ENCODE measurements at regions of chr6 and their contacts with region 1.

Region 1: DNA sequence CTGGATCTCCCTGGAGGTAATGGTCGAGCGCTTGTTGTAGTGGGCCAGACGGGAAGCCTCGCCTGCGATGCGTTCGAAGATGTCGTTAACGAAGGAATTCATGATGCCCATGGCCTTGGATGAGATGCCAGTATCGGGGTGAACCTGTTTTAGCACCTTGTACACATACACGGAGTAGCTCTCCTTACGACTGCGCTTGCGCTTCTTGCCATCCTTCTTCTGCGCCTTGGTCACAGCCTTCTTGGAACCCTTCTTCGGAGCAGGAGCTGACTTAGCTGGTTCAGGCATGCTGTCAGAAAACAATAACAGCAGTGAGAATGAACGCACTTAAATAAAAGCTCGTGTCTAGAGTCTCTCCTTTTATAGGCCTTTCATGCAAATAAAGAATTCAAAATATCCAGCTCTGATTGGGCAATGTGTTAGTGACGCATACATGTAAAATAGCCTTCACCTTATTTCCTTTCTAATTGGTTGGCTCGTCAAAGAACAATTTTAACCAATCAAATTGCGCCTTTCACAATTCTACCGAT is 129.2 kb downstream of the HFE start:
- DNase-seq: peak; percentile 62
- ATAC-seq: peak; percentile 78
- H3K4me3 Mint-ChIP-seq: no peak overlapping the region
- H3K27ac Mint-ChIP-seq: no peak overlapping the region
- H3K4me1 Mint-ChIP-seq: peaks cover 12% of the 10 kb centered on the region
- H3K27me3 Mint-ChIP-seq: no peaks in the 10 kb centered on the region
- CTCF ChIP-seq: no peak

Region 2: DNA sequence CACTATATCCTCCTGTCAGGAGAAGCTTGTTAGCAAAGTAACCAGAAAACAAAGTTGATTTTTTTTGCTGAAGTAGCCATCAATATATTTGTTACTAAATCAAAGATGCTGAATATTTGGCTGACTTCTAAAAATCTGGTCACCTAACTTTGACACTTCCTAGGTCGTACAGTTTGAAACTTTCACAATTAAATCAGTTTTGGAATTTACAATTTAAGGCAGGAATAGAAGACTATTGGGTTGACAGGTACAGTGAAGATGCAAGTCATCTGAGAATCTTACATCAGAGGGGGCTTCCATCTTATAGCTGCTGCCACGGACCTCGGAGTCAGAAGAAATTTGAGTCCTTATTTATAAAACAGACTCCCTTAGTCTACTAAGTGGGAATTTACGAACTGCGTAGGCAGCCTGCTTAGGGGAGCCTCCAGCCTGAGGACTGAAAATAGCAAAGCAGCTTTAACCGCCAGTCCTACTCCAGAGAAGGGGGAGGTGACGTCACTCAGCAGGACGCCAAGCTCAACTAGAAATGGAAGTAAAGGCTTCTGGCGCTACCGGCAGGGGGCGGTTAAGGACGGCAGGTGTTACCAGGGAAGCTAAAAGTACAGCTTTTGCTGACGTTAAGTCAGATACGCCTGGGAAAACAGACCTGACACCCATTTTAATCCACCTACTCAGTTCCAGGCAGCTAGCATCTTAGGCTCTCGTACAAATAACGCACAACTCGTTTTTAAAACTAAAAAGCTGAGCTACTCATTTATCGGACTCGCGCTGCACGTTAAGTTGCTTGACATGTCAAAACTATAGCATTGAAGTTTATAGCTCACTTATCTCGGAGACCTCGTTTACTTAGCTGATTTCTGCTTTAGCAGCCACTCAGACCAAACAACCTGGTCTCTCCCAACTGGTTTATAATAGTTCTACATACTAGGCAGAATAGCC is 190.3 kb before region 1 on chr6:
- CTCF ChIA-PET with region 1: no interaction called
- POLR2A ChIA-PET with region 1: interaction called, 28 read pairs
- intact Hi-C with region 1: loop called (anchors 5 kb)
- DNase-seq: peak; percentile 76
- ATAC-seq: peak; percentile 39
- H3K4me3 Mint-ChIP-seq: peak overlapping the region; percentile 96
- H3K27ac Mint-ChIP-seq: peak overlapping the region; percentile 99
- H3K4me1 Mint-ChIP-seq: peaks cover 35% of the 10 kb centered on the region
- H3K27me3 Mint-ChIP-seq: peaks cover 2% of the 10 kb centered on the region
- CTCF ChIP-seq: no peak

Region 3: GRCh38 chr6:26175428-26176181 is 40.8 kb before region 1 on chr6:
- CTCF ChIA-PET with region 1: interaction called, 8 read pairs
- POLR2A ChIA-PET with region 1: interaction called, 53 read pairs
- intact Hi-C with region 1: loop called (anchors 1 kb)
- DNase-seq: no peak
- ATAC-seq: no peak
- H3K4me3 Mint-ChIP-seq: no peak overlapping the region
- H3K27ac Mint-ChIP-seq: peak overlapping the region; percentile 65
- H3K4me1 Mint-ChIP-seq: peaks cover 38% of the 10 kb centered on the region
- H3K27me3 Mint-ChIP-seq: no peaks in the 10 kb centered on the region
- CTCF ChIP-seq: no peak

Region 4: GRCh38 chr6:26240154-26241032 is 24.0 kb after region 1 on chr6:
- CTCF ChIA-PET with region 1: interaction called, 3 read pairs
- POLR2A ChIA-PET with region 1: interaction called, 401 read pairs
- intact Hi-C with region 1: no loop called
- DNase-seq: peak; percentile 61
- ATAC-seq: peak; percentile 79
- H3K4me3 Mint-ChIP-seq: peak overlapping the region; percentile 82
- H3K27ac Mint-ChIP-seq: peak overlapping the region; percentile 92
- H3K4me1 Mint-ChIP-seq: peaks cover 26% of the 10 kb centered on the region
- H3K27me3 Mint-ChIP-seq: no peaks in the 10 kb centered on the region
- CTCF ChIP-seq: no peak

Region 5: DNA sequence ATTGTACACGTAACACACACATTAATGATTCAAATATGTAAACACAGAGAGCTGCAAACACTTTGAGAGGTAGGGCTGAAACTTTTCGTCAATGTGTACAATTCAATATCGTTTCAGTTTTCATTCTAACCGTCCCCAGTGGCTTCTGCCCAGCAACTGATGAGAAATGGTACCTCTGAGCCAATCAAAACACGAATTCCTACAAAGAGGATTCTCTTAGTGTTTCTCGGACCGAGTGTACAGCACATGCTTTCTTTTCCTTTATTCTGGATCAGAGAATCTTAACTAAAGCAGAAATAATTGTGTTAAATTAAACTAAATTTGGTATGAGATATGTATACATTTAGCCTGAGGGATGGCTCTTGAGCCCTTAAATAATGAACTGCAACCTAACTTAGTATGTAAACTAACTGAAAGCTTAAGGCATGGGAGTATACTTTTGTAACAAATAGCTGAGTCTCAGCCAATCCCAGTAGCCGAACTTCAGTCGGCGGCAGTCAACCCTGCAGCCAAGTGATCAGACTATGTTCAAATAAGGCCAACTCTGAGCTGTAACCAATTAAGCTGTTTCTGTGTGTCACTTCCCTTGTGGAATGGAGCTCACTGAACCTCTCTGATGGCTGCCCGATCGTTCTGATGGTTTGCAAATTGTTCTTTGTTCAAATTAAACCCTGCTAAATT is 257.5 kb after region 1 on chr6:
- CTCF ChIA-PET with region 1: no interaction called
- POLR2A ChIA-PET with region 1: interaction called, 14 read pairs
- intact Hi-C with region 1: no loop called
- DNase-seq: peak; percentile 49
- ATAC-seq: peak; percentile 94
- H3K4me3 Mint-ChIP-seq: peak overlapping the region; percentile 96
- H3K27ac Mint-ChIP-seq: peak overlapping the region; percentile 100
- H3K4me1 Mint-ChIP-seq: peaks cover 70% of the 10 kb centered on the region
- H3K27me3 Mint-ChIP-seq: no peaks in the 10 kb centered on the region
- CTCF ChIP-seq: no peak

Region 6: GRCh38 chr6:27146706-27147505 is 930.5 kb after region 1 on chr6:
- CTCF ChIA-PET with region 1: no interaction called
- POLR2A ChIA-PET with region 1: interaction called, 31 read pairs
- intact Hi-C with region 1: no loop called
- DNase-seq: peak; percentile 70
- ATAC-seq: peak; percentile 80
- H3K4me3 Mint-ChIP-seq: no peak overlapping the region
- H3K27ac Mint-ChIP-seq: no peak overlapping the region
- H3K4me1 Mint-ChIP-seq: peaks cover 26% of the 10 kb centered on the region
- H3K27me3 Mint-ChIP-seq: no peaks in the 10 kb centered on the region
- CTCF ChIP-seq: no peak

Measured in activated B cell treated with CpG ODN at 0.5 μM for 24 hours (primary cell).